ENCODE measurements at regions of chr11 and their contacts with region 1.

Region 1: DNA sequence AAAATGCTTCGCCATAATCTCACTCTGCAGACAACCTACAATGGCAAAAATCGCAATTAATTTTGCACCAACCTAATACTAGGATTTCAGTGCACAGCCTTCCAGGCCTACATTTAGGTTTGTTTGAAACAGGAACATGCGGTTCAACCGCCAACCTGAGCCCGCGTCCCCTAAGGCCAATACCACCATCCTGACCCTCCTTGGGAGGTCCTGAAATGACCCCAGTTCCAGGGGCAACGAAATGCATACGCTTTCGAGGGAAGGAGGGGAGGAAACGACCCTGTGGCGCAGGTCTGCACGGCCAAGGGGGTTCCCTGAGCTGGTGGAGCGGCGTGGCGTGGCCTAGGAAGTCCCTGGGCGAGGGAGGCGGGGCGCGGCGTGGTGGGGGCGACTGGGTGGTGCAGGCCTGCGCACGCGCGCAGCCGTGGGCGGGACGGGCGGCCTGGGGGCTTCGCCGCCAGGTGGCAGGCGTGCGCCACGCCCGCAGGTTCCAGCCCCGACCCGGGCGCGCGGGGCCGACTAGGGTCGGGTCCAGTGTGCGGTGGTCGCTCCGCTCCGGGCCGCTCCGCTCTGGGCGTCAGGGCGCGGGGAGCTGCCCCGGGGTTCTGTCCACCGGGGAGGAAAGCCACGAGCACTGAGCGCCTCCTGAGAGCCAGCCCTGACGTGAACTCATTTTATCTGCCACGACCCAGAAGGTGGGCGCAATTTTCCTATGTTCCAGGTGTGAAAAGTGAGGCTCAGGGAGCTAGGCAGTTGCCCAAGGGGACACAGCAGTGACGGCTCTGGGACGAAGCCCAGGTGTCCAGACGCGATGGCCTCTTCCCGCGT is 94.1 kb downstream of the SWAP70 start:
- DNase-seq: peak; percentile 95
- ATAC-seq: peak; percentile 72

Region 2: DNA sequence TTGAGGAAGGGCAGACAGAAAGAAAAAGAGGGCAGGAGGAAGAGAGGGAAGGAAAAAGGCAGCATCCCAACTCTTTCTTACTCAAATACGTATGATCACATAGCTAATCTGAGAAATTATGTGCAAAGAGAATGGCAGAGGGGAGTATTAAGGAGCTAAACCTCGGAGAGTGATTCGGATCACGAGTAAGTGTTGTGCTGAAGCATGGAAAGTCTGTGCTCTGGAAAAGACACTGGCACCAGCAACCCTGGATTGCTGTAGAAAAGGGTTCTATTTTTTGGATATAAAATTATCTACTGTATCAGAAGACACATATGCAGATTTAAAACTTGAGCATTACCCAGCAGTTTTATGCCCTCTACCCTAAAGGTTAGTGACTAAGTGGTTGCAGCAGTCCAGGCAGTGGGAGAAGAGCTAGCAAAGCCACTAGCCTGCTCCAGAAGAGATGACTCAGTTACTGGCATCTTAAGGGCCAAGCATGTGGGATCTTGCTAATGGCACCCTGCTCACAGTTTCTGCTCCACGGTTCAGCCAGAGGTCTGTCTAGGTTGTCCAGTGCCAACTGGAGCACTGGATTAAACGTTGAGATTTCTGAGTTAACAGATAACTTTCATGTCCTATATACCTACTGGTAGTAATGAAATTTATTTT is 57.6 kb after region 1 on chr11:
- intact Hi-C with region 1: no loop called
- DNase-seq: no peak
- ATAC-seq: no peak

Region 3: GRCh38 chr11:9972989-9973388 is 215.0 kb after region 1 on chr11:
- intact Hi-C with region 1: loop called (anchors 5 kb)
- DNase-seq: no peak
- ATAC-seq: peak; percentile 85

Region 4: GRCh38 chr11:10322830-10323792 is 565.1 kb after region 1 on chr11:
- intact Hi-C with region 1: loop called (anchors 10 kb)
- DNase-seq: peak; percentile 39
- ATAC-seq: peak; percentile 32

Measured in left ventricle myocardium superior (tissue), 1 donor.